ENCODE measurements at regions of chr11 and their contacts with region 1.

Region 1: DNA sequence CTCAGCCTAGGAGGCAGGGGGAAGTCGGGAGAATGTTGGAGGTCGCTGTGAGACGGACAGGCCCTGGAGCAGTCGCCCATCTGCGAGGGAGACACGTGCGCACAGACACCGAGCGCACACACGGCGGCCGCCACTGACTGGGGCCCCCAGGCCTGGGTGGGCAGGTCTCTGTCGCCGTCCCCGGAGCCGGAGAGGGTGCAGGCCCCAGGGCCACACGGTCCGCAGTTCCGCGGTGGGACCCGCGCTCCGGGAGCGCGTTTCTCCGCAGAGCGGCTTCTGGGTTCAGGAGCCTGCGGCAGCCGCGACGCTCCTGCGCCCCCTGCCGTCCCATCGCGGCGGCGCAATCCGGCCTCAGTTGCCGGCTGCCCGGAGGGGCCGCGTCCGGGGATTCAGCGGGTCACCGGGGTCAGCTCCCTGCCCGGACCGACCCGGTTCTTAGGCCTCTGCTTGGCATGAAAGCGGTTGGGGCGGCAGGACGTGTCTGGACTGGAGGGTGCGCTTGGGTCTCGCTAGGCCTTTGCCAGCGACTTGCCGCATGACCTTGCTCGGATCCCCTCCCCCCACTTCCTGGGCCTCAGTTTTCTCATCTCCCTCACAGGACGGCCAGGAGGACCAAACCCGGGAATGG is 31.2 kb downstream of the PDE2A start:
- DNase-seq: peak in 1 of 2 donors; percentile 65
- ATAC-seq: peak; percentile 84

Region 2: GRCh38 chr11:72585762-72586311 is 57.2 kb before region 1 on chr11:
- intact Hi-C with region 1: loop called (anchors 2 to 5 kb)
- DNase-seq: peak in 1 of 2 donors; percentile 71
- ATAC-seq: peak; percentile 85